Activated T-helper 2 cell treated with anti-CD3 and anti-CD28 coated beads, Interferon-gamma antibody, Interleukin-2, Interleukin-4, amounts not matched to agents 10 μg/mL and 5 μg/mL and 100 μg/mL, durations not matched to agents 14 hours and 24 hours and 36 hours (primary cell): ENCODE measurements at regions of chr12 and their contacts with region 1.

Region 1: DNA sequence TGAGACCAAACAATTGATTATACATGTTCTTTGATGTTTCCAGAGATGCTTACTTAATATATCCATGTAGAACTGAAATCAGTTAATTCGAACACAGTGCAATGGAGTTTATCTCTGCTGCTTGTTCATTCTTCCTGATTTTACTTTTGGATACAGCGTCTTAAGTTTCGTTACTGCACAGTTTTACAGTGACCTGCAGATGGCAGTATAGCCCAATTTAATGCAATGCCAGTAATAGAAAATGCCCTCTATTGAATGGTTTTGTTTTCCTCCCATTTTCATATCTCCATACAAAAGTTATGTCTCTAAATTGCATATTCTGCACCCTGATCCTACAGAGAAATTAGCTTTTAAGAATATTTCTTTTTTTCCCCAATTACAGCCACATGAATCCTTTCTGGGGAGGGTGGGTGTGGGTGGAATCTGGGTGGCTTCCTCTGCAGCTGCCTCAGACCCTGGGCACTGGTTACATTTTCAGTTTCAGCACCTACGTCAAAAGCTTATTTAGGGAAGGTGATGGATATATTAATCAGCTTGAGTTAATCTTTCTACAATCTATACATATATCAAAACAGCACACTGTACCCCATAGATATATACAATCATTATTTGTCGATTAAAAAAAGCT is 101.1 kb upstream of the DCD start:
- DNase-seq: no peak
- H3K4me3 Mint-ChIP-seq: no peak overlapping the region
- H3K27ac Mint-ChIP-seq: no peak overlapping the region
- H3K4me1 Mint-ChIP-seq: peaks cover 16% of the 10 kb centered on the region
- H3K27me3 Mint-ChIP-seq: peaks cover 17% of the 10 kb centered on the region

Region 2: DNA sequence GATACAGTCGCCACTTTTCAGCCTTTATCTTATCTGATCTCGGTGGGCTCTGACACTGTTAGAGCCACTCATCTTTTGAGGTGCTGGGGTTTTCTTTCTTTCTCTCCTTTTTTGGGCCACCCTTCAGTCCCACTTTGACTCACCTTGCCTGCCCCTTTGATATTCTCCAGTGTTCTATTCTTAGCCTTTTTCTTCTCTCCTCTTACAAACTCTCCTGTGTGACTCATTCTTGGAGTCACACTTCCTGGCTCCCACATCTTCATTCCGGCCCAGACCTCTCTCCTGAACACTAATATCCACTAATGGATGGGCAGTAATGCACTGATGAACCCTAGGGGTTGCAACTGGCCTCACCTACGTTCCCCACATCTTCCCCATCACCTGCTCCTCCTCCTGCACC is 98.9 kb before region 1 on chr12:
- intact Hi-C with region 1: no loop called
- DNase-seq: no peak
- H3K4me3 Mint-ChIP-seq: no peak overlapping the region
- H3K27ac Mint-ChIP-seq: no peak overlapping the region
- H3K4me1 Mint-ChIP-seq: no peaks in the 10 kb centered on the region
- H3K27me3 Mint-ChIP-seq: peaks cover 27% of the 10 kb centered on the region

Region 3: GRCh38 chr12:54958048-54958658 is 208.8 kb after region 1 on chr12:
- intact Hi-C with region 1: loop called (anchors 1 kb)
- DNase-seq: no peak
- H3K4me3 Mint-ChIP-seq: peak overlapping the region; percentile 46
- H3K27ac Mint-ChIP-seq: peak overlapping the region; percentile 86
- H3K4me1 Mint-ChIP-seq: peaks cover 80% of the 10 kb centered on the region
- H3K27me3 Mint-ChIP-seq: no peaks in the 10 kb centered on the region

Region 4: GRCh38 chr12:55073043-55074022 is 324.0 kb after region 1 on chr12:
- intact Hi-C with region 1: loop called (anchors 1 kb)
- DNase-seq: peak; percentile 60
- H3K4me3 Mint-ChIP-seq: no peak overlapping the region
- H3K27ac Mint-ChIP-seq: no peak overlapping the region
- H3K4me1 Mint-ChIP-seq: peaks cover 10% of the 10 kb centered on the region
- H3K27me3 Mint-ChIP-seq: peaks cover 31% of the 10 kb centered on the region